Posterior vena cava (tissue), 2 donors: ENCODE measurements at regions of chr12 and their contacts with region 1.

Region 1: GRCh38 chr12:13992106-13992505 is 10.7 kb upstream of the GRIN2B start:
- DNase-seq: no peak

Region 2: GRCh38 chr12:13947276-13947946 is 44.7 kb before region 1 on chr12:
- intact Hi-C with region 1: loop called in 1 of 2 experiments (anchors 2 kb)
- DNase-seq: no peak

Region 3: GRCh38 chr12:14086838-14087237 is 94.7 kb after region 1 on chr12:
- intact Hi-C with region 1: no loop called
- DNase-seq: no peak